ENCODE measurements at regions of chr20 and their contacts with region 1.

Region 1: DNA sequence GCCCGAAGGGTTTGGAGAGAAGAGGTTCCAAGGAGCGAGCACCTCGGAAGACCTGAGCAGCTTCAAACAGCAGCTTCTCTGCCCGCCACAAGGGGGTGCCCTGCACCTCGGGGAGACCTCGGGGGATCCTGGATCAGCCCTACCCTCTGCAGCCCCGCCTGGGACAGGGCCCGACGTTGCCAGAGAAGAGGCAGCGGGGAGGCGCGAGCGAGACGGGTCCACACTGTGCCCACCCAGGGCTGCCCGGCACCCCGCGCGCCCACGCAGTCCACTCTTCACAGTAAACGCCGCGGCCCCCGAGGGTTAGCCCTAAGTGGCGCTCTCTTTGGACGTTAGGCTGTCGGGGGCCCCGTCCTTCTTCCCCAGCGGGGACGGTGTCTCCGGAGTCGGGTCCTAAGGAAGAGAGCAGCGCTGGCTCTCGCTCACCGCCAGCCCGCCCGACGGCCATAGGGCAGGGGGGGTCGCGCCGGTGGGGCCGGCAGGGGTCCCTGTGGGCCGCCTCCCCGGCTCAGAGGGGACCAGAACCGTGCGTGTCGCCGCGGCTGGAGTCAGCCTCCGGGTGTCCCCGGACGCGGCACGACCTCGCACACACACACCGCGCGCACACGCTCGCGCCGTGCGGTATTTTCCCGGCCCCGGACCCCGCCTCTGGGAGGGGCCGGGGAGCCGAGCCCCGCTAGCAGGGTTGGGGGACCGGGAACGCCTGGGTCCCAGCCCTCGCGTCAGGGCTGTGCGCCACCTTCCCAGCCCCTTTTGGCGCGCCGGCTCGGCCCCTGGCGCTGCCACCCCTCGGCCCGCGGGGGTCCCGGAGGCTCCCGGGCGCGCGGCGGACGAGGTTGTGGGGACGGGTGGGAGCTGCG is 929 bp downstream of the CDH22 start:
- DNase-seq: peak; percentile 69 to 87
- ATAC-seq: peak; percentile 65 to 91; a peak in 5 of 6 replicates
- H3K4me3 ChIP-seq: peak overlapping the region; percentile 55
- H3K27ac ChIP-seq: peak overlapping the region in 1 of 2 experiments; percentile 70; a peak in 4 of 6 replicates
- H3K4me1 ChIP-seq: peaks cover 3% of the 10 kb centered on the region
- CTCF ChIP-seq: peak; percentile 74
- EP300 ChIP-seq: no peak
- POLR2A ChIP-seq: no peak
- RAD21 ChIP-seq: peak; percentile 72

Region 2: DNA sequence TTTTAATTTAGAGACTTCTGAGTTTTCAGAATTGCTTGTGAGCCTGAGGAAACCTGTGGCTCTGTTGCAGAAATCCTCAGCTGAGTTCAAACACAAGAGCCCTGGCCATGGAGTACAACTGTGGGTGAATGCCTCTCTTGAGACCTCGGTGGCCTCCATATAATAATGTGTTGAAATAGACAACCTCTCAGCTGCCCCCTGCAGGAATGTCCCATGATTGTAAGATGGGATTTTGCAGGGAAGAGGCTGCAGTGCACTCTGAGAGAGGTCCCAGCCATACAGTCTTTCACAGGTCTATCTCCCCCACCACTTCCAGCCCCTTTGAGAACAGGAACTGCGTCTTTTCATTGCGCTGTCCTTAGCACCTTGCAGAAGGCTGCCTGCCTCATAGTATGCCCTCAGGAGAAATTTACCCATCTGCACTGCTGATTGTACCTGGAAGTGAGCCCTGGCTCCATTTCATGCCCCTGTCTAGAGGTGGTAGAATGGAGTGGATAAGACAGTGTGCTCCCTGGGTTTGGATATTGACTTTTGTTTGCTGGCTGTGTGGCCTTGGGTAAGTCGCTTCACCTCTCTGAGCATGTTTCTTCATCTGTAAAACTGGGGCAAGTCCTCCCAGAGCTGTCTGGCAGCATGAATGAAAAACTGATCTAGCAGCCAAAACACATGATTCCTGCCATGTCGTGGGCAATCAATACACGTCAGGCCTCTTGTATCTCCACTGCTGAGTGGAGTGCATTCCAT is 17.8 kb after region 1 on chr20:
- CTCF ChIA-PET with region 1: interaction called, 45 read pairs
- POLR2A ChIA-PET with region 1: no interaction called
- DNase-seq: peak; percentile 56 to 62
- ATAC-seq: peak; percentile 85 to 95
- H3K4me3 ChIP-seq: no peak overlapping the region
- H3K27ac ChIP-seq: no peak overlapping the region
- H3K4me1 ChIP-seq: no peaks in the 10 kb centered on the region
- CTCF ChIP-seq: peak; percentile 43; the same call in 2 of the 3 replicates
- EP300 ChIP-seq: no peak
- POLR2A ChIP-seq: no peak
- RAD21 ChIP-seq: peak; percentile 38 to 50; a peak in 3 of 5 replicates

Region 3: DNA sequence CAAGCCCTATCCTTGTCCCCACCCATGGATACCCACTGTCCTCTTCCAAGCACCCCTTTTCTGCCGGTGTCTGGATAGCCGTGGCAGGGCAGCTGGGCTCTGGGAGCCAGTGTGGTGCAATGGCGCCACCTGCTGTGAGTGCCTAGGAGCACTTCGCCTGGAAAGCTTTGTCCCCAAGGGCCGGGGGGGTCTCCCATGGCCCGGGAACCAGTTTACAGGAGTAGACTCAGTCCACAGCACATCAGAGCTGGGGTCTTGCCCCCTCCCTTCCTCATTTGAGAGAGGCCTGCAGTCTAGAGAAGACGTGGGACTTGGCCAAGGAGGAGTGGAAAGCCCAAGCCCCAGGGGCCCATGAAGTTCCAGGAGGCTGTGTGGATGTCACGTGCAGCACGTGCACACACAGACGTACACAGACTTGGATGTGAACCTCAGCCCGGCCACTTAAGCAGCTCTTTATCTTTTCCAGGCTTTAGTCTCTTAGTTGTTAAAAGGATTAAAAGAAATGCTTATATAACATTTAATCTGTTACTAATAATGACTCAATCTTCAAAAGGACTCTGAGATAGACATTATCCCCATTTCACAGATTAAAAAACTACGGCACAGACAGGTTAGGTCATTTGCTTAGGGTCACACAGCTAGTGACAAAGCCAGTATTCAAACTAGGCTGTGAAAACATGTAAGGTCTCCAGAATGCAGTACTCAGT is 41.8 kb after region 1 on chr20:
- CTCF ChIA-PET with region 1: interaction called, 25 read pairs
- POLR2A ChIA-PET with region 1: no interaction called
- DNase-seq: peak; percentile 43 to 67
- ATAC-seq: peak; percentile 46 to 77; a peak in 4 of 6 replicates
- H3K4me3 ChIP-seq: no peak overlapping the region
- H3K27ac ChIP-seq: no peak overlapping the region
- H3K4me1 ChIP-seq: peaks cover 14% of the 10 kb centered on the region
- CTCF ChIP-seq: peak; percentile 66
- EP300 ChIP-seq: no peak
- POLR2A ChIP-seq: no peak
- RAD21 ChIP-seq: peak; percentile 74 to 80

Region 4: GRCh38 chr20:46406199-46406985 is 99.0 kb after region 1 on chr20 and contains the start of gene ELMO2:
- CTCF ChIA-PET with region 1: interaction called, 13 read pairs
- POLR2A ChIA-PET with region 1: interaction called, 7 read pairs
- DNase-seq: peak; percentile 95 to 96
- ATAC-seq: peak; percentile 92 to 95
- H3K4me3 ChIP-seq: peak within 1 kb of the TSS; percentile 91
- H3K27ac ChIP-seq: peak within 1 kb of the TSS; percentile 94 to 99
- H3K4me1 ChIP-seq: peaks cover 14% of the 10 kb centered on the region
- CTCF ChIP-seq: no peak
- EP300 ChIP-seq: no peak
- POLR2A ChIP-seq: peak; percentile 44; the same call in 1 of the 2 replicates
- RAD21 ChIP-seq: no peak
- polyA plus RNA-seq, gene ELMO2: 25.1 and 31.1 TPM in 2 replicates

Region 5: GRCh38 chr20:46430921-46431712 is 123.7 kb after region 1 on chr20:
- CTCF ChIA-PET with region 1: no interaction called
- POLR2A ChIA-PET with region 1: no interaction called
- DNase-seq: no peak
- ATAC-seq: no peak
- H3K4me3 ChIP-seq: no peak overlapping the region
- H3K27ac ChIP-seq: no peak overlapping the region
- H3K4me1 ChIP-seq: no peaks in the 10 kb centered on the region
- CTCF ChIP-seq: no peak
- EP300 ChIP-seq: no peak
- POLR2A ChIP-seq: no peak
- RAD21 ChIP-seq: no peak

Region 6: DNA sequence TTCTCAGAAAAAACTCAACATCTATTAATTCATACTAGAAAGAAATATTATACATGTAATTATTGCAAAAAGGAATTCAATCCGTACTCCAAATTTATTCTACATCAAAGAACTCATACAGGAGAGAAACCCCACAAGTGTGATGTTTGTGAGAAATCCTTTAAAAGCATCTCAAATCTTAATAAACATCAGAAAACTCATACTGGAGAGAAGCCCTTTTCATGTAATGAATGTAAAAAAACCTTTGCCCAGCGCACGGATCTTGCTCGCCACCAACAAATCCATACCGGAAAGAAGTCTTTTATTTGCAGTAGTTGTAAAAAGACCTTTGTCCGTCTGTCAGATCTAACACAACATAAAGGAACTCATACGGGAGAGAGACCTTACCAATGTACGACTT is 184.0 kb after region 1 on chr20:
- CTCF ChIA-PET with region 1: no interaction called
- POLR2A ChIA-PET with region 1: no interaction called
- DNase-seq: no peak
- ATAC-seq: no peak
- H3K4me3 ChIP-seq: no peak overlapping the region
- H3K27ac ChIP-seq: no peak overlapping the region
- H3K4me1 ChIP-seq: no peaks in the 10 kb centered on the region
- CTCF ChIP-seq: no peak
- EP300 ChIP-seq: no peak
- POLR2A ChIP-seq: no peak
- RAD21 ChIP-seq: no peak

Measured in A549 (cell line).